ENCODE measurements at regions of chr17 and their contacts with region 1.

Region 1: GRCh38 chr17:34637548-34638525 is 58.5 kb downstream of the TMEM132E start:
- DNase-seq: peak; percentile 32
- H3K4me3 ChIP-seq: peak overlapping the region in 1 of 3 experiments; percentile 3
- H3K27ac ChIP-seq: no peak overlapping the region
- H3K4me1 ChIP-seq: peaks cover 7% of the 10 kb centered on the region
- H3K27me3 ChIP-seq: no peaks in the 10 kb centered on the region
- CTCF ChIP-seq: peak; percentile 85 to 94

Region 2: DNA sequence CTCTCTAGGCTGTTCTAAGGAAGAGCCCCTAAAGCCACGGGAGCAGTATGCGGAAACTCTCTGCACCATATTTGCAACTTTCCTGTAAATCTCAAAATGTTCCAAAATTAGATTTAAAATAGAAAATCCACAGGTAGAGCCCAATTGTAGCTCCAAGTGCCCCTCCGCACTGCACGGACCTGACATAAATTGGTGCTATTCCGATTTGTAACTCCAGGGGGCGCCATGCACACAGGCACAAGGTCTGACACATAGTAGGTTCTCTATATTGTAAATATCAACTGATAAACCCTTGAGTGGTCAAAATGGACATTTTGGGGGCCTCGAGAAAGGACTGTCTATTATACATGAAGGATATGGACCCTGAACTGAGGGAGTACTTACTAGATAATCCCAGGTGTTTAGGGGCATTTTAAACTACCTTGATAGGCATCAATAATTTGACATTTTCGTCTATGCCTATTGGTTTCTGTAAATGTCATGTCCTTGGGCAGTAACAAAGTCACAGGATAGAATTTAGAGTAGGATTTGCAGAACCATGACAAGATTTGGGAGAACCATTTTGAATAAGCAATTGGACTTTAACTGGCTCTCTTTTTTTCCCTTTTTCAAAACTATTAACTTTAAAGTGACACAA is 95.0 kb before region 1 on chr17:
- CTCF ChIA-PET with region 1: no interaction called
- dilution Hi-C with region 1: loop called (anchors 5 kb)
- in situ Hi-C with region 1: no loop called
- intact Hi-C with region 1: loop called (anchors 1 kb)
- DNase-seq: no peak
- H3K4me3 ChIP-seq: no peak overlapping the region
- H3K27ac ChIP-seq: no peak overlapping the region
- H3K4me1 ChIP-seq: no peaks in the 10 kb centered on the region
- H3K27me3 ChIP-seq: no peaks in the 10 kb centered on the region
- CTCF ChIP-seq: peak; percentile 87 to 91

Region 3: DNA sequence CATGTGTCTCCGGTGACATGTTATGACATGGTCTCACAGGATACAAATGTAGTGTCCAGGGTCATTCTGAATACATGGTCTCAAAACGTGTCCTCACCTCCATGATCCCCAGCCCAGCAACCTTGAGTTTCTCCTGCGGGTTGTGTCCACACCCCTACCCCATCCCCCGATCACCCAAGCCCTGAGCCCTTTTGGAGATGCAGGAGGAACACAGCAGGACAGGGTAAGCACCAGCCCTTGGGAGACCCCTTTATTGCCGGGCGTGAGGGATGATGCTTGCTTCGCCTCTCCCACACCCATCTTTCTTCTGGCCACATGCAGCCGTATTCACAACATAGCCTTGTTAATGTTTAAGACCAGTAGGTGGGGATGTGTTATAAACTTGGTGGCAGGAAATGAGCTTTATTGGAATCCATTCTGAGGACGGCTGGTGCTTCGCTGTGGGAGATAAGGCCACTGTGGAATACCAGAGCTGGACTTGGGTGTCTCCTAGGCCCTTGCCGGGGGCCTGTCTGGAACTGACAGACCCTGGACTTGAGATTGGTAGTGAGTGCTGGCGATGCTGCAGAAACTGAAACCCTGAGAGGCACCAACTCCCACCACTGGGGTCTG is 52.9 kb before region 1 on chr17:
- CTCF ChIA-PET with region 1: no interaction called
- dilution Hi-C with region 1: loop called (anchors 5 kb)
- in situ Hi-C with region 1: no loop called
- intact Hi-C with region 1: loop called (anchors 1 kb)
- DNase-seq: peak; percentile 15
- H3K4me3 ChIP-seq: no peak overlapping the region
- H3K27ac ChIP-seq: no peak overlapping the region
- H3K4me1 ChIP-seq: no peaks in the 10 kb centered on the region
- H3K27me3 ChIP-seq: peaks cover 30% of the 10 kb centered on the region
- CTCF ChIP-seq: peak; percentile 6 to 45

Region 4: GRCh38 chr17:34692920-34693319 is 55.1 kb after region 1 on chr17:
- CTCF ChIA-PET with region 1: no interaction called
- dilution Hi-C with region 1: loop called (anchors 5 kb)
- in situ Hi-C with region 1: no loop called
- intact Hi-C with region 1: no loop called
- DNase-seq: peak; percentile 35
- H3K4me3 ChIP-seq: no peak overlapping the region
- H3K27ac ChIP-seq: no peak overlapping the region
- H3K4me1 ChIP-seq: no peaks in the 10 kb centered on the region
- H3K27me3 ChIP-seq: no peaks in the 10 kb centered on the region
- CTCF ChIP-seq: no peak

Region 5: DNA sequence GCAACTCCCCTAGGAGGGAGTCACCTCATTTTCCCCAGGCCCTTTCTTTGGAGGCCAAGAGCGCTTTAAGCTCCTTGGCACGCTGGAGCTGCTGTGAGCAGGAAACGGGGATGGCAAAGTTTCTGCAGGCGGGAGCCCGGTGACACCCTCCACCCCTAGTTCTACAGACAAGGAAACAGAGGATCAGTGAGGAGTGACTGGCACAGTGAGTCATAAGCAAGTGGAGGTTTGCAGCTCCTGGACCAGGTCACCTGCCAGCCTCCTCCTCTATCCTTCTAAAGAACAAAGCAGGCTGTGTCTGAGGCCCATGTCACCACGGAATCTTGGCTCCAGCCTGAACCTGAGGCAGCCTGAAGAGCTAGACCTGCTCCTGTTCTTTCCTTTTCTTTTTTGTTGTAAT is 83.5 kb after region 1 on chr17:
- CTCF ChIA-PET with region 1: no interaction called
- dilution Hi-C with region 1: loop called (anchors 5 kb)
- in situ Hi-C with region 1: no loop called
- intact Hi-C with region 1: no loop called
- DNase-seq: peak; percentile 12
- H3K4me3 ChIP-seq: no peak overlapping the region
- H3K27ac ChIP-seq: no peak overlapping the region
- H3K4me1 ChIP-seq: no peaks in the 10 kb centered on the region
- H3K27me3 ChIP-seq: no peaks in the 10 kb centered on the region
- CTCF ChIP-seq: no peak

Measured in mammary epithelial cell (primary cell).